ENCODE measurements at regions of chr1 and their contacts with region 1.

Region 1: DNA sequence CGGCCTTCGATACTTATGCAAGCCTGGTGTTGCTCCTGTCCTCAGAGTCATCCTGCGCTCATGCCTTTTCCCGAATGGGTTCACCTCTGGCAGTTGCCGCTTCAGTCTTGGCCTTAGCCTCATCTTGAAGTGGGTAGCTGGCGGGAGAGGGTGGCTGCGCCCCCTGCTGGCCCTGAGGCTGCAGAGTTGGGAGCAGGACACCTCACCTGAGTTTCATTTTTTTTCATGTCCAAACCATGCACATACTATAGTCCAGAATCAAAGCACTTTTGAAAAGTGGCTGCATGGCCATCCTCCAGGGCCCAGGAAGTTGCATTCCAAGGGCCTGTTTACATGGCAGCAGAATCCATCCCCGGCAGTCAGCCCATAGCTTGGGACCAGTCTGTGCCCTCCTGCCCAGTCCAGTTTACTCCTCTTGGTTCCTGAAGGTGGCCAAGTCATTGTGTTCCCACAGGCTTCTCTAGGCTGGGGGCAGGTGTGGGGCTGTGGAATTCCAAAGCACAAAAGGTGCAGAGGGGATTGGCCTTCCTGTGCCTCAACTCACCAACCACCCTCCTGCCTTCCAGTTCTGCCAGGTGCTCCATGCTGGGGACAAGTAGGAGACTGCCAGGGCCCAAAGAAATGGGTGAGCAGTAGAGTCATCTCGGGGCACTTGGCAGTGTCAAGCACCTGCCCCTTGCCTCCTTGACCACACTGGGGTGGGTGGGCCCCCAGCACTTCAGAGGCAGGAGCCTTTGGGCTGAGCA is 44.0 kb downstream of the YARS1 start:
- DNase-seq: peak; percentile 61
- ATAC-seq: peak; percentile 85
- H3K4me3 ChIP-seq: no peak overlapping the region
- H3K27ac ChIP-seq: peak overlapping the region; percentile 25
- H3K4me1 ChIP-seq: peaks cover 22 to 39% of the 10 kb centered on the region in 2 experiments
- H3K27me3 ChIP-seq: no peaks in the 10 kb centered on the region
- CTCF ChIP-seq: peak; percentile 96 to 98 (median 97)
- POLR2A ChIP-seq: no peak
- RAD21 ChIP-seq: peak; percentile 99

Region 2: GRCh38 chr1:32400876-32401631 is 372.1 kb before region 1 on chr1:
- CTCF ChIA-PET with region 1: interaction called, 8 read pairs
- POLR2A ChIA-PET with region 1: no interaction called
- RAD21 ChIA-PET with region 1: no interaction called
- intact Hi-C with region 1: loop called (anchors 2 kb)
- DNase-seq: peak; percentile 66
- ATAC-seq: peak; percentile 98
- H3K4me3 ChIP-seq: no peak overlapping the region
- H3K27ac ChIP-seq: peak overlapping the region; percentile 37; the same call in 1 of the 2 replicates
- H3K4me1 ChIP-seq: peaks cover 3 to 7% of the 10 kb centered on the region in 2 experiments; a peak in 2 of 4 replicates
- H3K27me3 ChIP-seq: no peaks in the 10 kb centered on the region
- CTCF ChIP-seq: peak; percentile 88 to 97 (median 93)
- POLR2A ChIP-seq: no peak
- RAD21 ChIP-seq: peak; percentile 94

Region 3: DNA sequence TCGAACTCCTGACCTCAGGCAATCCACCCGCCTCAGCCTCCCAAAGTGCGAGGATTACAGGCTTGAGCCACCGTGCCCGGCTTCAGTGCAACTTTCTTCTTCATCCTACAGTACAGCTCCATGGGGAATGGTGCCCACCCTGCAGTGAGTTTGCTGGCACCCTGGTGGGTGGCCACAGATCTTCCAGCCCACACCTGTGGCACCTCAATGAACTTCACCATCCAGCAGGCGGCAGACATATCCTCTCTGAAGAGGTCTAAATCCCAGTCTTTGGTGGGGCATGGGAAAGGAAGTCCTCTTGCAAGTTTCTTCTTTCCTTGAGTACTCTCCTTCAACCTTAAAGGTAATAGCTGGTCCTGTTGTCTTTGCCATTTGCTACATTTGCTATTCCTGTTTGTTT is 252.0 kb before region 1 on chr1:
- CTCF ChIA-PET with region 1: interaction called, 10 read pairs
- POLR2A ChIA-PET with region 1: no interaction called
- RAD21 ChIA-PET with region 1: interaction called in 1 of 2 experiments, 4 read pairs
- intact Hi-C with region 1: loop called (anchors 1 kb)
- DNase-seq: no peak
- ATAC-seq: peak; percentile 43
- H3K4me3 ChIP-seq: no peak overlapping the region
- H3K27ac ChIP-seq: no peak overlapping the region
- H3K4me1 ChIP-seq: peaks cover 7 to 8% of the 10 kb centered on the region in 2 experiments
- H3K27me3 ChIP-seq: no peaks in the 10 kb centered on the region
- CTCF ChIP-seq: no peak
- POLR2A ChIP-seq: no peak
- RAD21 ChIP-seq: 0 out of 2 replicates have a peak, but pooled peaks have one; percentile 15

Region 4: DNA sequence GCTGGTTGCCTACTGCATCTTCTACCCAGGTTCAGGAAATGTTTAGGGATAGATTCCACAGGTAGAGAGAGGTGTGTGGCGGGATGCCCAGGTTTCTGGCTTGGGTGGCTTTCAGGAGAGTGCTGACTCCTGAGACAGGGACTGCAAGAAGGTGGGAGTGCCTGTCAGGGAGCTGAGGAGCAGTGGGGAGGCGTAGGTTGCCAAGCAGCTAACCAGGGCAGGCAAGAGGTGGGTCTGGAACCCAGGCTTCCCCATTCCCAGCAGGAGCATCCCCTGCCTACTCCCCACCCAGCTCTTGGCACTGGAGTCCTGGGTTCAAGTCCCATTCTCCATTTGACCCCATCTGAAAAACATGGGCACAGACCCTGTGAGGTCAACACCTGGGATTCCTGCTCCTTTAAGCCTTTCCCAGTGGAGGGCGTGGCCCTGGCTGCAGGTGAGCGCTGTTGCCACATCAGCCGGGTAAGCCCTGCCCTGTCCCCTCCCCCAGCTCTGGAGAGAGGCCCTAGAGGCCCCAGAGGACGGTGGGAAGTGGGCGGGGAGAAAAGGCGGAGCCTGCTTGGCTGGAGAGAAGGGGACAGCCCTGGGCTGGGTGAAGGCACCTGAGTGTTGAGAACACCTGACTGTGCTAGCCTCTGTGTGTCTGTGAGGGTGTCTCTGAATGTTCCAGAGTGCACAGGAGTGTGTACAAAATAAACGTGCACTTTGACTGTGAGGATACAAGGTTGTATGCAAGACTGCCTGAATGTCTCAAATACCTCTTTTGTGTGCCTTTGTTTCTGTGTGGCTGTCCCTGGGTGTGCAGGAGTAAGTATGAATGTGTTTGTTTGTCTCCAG is 56.7 kb before region 1 on chr1:
- CTCF ChIA-PET with region 1: interaction called, 108 read pairs
- POLR2A ChIA-PET with region 1: interaction called, 13 read pairs
- RAD21 ChIA-PET with region 1: interaction called, 31 to 41 read pairs
- intact Hi-C with region 1: loop called (anchors 1 kb)
- DNase-seq: peak; percentile 89
- ATAC-seq: peak; percentile 91
- H3K4me3 ChIP-seq: peak overlapping the region; percentile 39 to 49
- H3K27ac ChIP-seq: peak overlapping the region; percentile 53
- H3K4me1 ChIP-seq: peaks cover 18 to 35% of the 10 kb centered on the region in 2 experiments
- H3K27me3 ChIP-seq: no peaks in the 10 kb centered on the region
- CTCF ChIP-seq: no peak
- POLR2A ChIP-seq: peak; percentile 83
- RAD21 ChIP-seq: peak; percentile 39; the same call in 1 of the 2 replicates

Region 5: GRCh38 chr1:32742199-32742947 is 30.8 kb before region 1 on chr1:
- CTCF ChIA-PET with region 1: no interaction called
- POLR2A ChIA-PET with region 1: no interaction called
- RAD21 ChIA-PET with region 1: interaction called in 1 of 2 experiments, 11 read pairs
- intact Hi-C with region 1: no loop called
- DNase-seq: no peak
- ATAC-seq: peak; percentile 59
- H3K4me3 ChIP-seq: peak overlapping the region; percentile 81 to 89
- H3K27ac ChIP-seq: peak overlapping the region; percentile 90
- H3K4me1 ChIP-seq: peaks cover 51 to 63% of the 10 kb centered on the region in 2 experiments
- H3K27me3 ChIP-seq: no peaks in the 10 kb centered on the region
- CTCF ChIP-seq: no peak
- POLR2A ChIP-seq: no peak
- RAD21 ChIP-seq: no peak

Region 6: DNA sequence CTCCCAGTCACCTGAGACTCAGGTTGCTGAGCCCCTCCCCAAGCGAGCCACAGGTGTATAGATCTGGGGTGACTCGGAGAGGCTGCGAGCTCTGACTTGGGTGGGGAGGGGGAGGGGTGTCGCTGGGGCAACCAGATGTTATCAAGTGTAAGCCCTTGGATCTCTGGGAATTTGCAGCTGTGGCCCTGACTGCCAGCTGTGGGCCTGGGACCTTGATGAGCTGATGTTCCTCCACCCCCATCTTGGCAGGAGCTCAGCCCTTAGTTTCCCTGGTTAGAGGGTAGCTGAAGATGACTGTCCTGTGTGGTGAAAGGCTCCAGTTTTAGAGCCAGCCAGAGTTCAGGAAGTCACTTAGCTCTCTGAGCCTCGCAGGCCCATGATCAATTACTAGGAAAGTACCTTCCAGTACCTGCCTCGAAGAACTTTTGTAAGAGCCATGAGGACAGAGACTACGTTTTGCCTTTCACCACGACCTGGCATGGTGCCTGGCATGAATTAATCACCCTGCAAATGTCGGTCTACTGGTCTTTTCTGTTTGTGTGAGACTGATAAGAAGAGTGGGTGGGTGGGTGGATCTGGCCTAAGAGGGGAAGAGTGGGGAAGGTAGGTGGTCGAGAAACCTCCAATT is 11.8 kb before region 1 on chr1:
- CTCF ChIA-PET with region 1: interaction called, 11 read pairs
- POLR2A ChIA-PET with region 1: interaction called, 11 read pairs
- RAD21 ChIA-PET with region 1: interaction called in 1 of 2 experiments, 3 read pairs
- intact Hi-C with region 1: no loop called
- DNase-seq: peak; percentile 66
- ATAC-seq: peak; percentile 31
- H3K4me3 ChIP-seq: peak overlapping the region; percentile 48 to 55
- H3K27ac ChIP-seq: peak overlapping the region; percentile 98
- H3K4me1 ChIP-seq: peaks cover 88 to 99% of the 10 kb centered on the region in 2 experiments
- H3K27me3 ChIP-seq: no peaks in the 10 kb centered on the region
- CTCF ChIP-seq: no peak
- POLR2A ChIP-seq: no peak
- RAD21 ChIP-seq: no peak

Region 7: GRCh38 chr1:32933742-32934322 is 160.6 kb after region 1 on chr1:
- CTCF ChIA-PET with region 1: no interaction called
- POLR2A ChIA-PET with region 1: no interaction called
- RAD21 ChIA-PET with region 1: no interaction called
- intact Hi-C with region 1: no loop called
- DNase-seq: no peak
- ATAC-seq: peak; percentile 46
- H3K4me3 ChIP-seq: no peak overlapping the region
- H3K27ac ChIP-seq: peak overlapping the region; percentile 16
- H3K4me1 ChIP-seq: peaks cover 12 to 19% of the 10 kb centered on the region in 2 experiments; a peak in 3 of 4 replicates
- H3K27me3 ChIP-seq: no peaks in the 10 kb centered on the region
- CTCF ChIP-seq: no peak
- POLR2A ChIP-seq: no peak
- RAD21 ChIP-seq: no peak

Measured in HCT116 (cell line).